Motor neuron (in vitro differentiated cells): ENCODE measurements at regions of chr6 and their contacts with region 1.

Region 1: DNA sequence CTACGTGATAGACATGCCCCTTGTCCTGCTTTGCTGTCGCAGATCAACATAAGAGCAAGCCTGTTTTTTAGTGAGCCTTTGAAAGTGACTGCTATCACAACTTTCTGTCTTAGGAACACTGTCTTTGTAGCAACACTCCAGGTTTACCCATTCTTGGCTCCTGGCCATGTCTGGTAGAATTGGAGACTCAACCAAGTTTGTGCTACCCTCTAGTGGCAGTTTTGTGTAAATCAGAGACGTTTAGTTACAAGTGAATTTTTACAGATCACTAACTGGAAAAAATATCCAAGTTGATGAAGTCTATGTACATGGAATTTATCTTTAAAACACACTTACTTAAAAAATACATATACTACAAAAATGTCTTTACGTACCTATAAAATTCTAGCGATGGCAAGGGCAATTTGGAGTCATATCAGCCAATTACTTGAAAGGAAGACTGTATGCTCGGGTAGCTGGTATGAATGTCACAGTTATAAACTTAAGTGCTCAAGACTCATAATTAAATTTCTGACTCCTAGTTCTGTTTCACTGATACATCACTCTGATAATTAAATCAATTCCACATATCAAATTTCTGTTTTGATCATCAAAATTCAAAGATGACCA is 101.4 kb downstream of the ADGB start:
- ATAC-seq: peak; percentile 43 to 65 (median 57)
- H3K4me3 ChIP-seq: no peak overlapping the region
- H3K27ac ChIP-seq: no peak overlapping the region
- H3K4me1 ChIP-seq: no peaks in the 10 kb centered on the region

Region 2: GRCh38 chr6:146028293-146028691 is 671.9 kb before region 1 on chr6:
- in situ Hi-C with region 1: loop called in 1 of 9 experiments (anchors 25 kb)
- ATAC-seq: peak; percentile 72 to 100 (median 85)
- H3K4me3 ChIP-seq: peak overlapping the region; percentile 27 to 41 (median 32)
- H3K27ac ChIP-seq: no peak overlapping the region
- H3K4me1 ChIP-seq: no peaks in the 10 kb centered on the region

Region 3: GRCh38 chr6:146543211-146543939 is 156.8 kb before region 1 on chr6 and contains the start of gene RAB32:
- in situ Hi-C with region 1: loop called in 1 of 9 experiments (anchors 10 kb)
- ATAC-seq: peak; percentile 90 to 97 (median 96)
- H3K4me3 ChIP-seq: peak within 1 kb of the TSS; percentile 37 to 70 (median 54)
- H3K27ac ChIP-seq: peak within 1 kb of the TSS in 1 of 2 donors; percentile 77
- H3K4me1 ChIP-seq: peaks cover 0 to 6% of the 10 kb centered on the region in 2 donors
- total RNA-seq, gene RAB32: 3.1 to 91.4 (median 8.2) TPM

Region 4: DNA sequence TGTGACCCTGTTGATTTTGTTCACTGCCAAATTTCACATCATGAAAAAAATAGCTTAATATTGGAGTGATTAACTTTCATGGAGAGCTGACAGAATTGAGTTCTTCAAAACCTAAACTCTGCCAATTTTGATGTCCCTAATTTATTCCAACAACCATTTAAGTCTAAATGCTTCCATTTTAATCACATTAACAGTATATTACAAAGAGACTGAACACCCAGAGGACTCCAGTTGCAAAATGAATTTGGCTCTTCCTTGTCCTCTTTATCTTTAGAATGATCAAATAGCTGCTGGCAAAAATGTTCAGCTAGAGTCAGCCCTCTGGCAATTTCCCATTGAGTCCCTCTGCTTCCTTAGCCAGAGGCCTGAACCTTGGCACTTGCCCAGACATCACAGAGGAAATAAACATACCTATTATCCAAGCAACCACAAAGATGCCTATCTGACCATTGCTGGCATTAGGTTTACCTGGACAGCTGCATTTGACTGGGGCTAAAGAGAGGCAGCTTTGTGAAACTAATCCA is 205.1 kb after region 1 on chr6:
- in situ Hi-C with region 1: no loop called
- ATAC-seq: peak in 4 of 8 experiments; percentile 30 to 53 (median 42)
- H3K4me3 ChIP-seq: no peak overlapping the region
- H3K27ac ChIP-seq: no peak overlapping the region
- H3K4me1 ChIP-seq: no peaks in the 10 kb centered on the region